ENCODE measurements at regions of chr9 and their contacts with region 1.

Region 1: DNA sequence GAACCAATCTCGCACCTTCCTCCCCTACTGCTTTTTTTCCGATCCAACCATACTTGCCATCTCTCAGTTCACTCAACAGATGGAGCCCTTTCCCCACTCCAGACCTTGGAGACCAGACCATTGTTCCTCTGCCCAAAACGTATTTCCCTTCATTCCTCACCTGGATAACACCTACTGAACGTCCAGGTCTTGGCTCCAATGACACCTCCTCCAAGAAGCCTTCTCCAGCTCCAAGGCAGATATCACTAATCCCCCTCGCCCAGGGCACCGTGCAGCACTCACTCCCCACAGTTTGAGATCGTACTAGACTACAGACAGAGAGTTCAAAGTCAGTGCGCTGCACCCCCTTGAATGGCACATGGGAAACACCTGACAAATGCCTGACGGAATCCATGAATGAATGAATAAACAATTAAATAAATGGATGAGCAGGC is 47.1 kb upstream of the AKNA start:
- DNase-seq: peak; percentile 31 to 60 (median 46)
- ATAC-seq: peak; percentile 86
- H3K4me3 ChIP-seq: no peak overlapping the region
- H3K27ac ChIP-seq: no peak overlapping the region
- H3K4me1 ChIP-seq: peaks cover 0 to 6% of the 10 kb centered on the region in 2 experiments; a peak in 2 of 5 replicates
- H3K27me3 ChIP-seq: no peaks in the 10 kb centered on the region; a peak in 1 of 5 replicates
- CTCF ChIP-seq: peak; percentile 64 to 78 (median 71)
- EP300 ChIP-seq: no peak
- POLR2A ChIP-seq: no peak
- RAD21 ChIP-seq: peak; percentile 71 to 87

Region 2: DNA sequence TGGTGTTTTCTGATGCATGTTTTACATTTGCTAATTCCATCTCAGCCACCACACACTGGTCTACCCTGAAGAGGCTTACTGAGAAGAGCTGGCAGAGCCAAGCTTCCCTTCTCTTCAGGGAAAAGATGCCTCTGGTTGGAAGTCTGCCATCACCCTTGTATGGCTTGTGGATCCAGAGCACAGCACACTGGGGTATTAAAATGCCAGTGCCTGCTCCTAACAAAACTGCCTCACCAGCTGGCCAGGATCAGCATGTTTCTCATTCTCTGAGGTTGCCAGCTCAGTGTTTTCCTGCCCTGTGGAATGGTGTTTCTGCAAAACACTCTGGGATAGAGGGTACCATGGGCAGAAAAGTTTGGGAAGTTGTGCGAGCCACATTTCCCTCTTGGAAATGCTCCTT is 590.4 kb before region 1 on chr9:
- CTCF ChIA-PET with region 1: no interaction called
- POLR2A ChIA-PET with region 1: no interaction called
- in situ Hi-C with region 1: no loop called
- intact Hi-C with region 1: no loop called
- DNase-seq: no peak
- ATAC-seq: no peak
- H3K4me3 ChIP-seq: no peak overlapping the region
- H3K27ac ChIP-seq: no peak overlapping the region
- H3K4me1 ChIP-seq: no peaks in the 10 kb centered on the region
- H3K27me3 ChIP-seq: no peaks in the 10 kb centered on the region
- CTCF ChIP-seq: no peak
- EP300 ChIP-seq: no peak
- POLR2A ChIP-seq: no peak
- RAD21 ChIP-seq: no peak

Region 3: DNA sequence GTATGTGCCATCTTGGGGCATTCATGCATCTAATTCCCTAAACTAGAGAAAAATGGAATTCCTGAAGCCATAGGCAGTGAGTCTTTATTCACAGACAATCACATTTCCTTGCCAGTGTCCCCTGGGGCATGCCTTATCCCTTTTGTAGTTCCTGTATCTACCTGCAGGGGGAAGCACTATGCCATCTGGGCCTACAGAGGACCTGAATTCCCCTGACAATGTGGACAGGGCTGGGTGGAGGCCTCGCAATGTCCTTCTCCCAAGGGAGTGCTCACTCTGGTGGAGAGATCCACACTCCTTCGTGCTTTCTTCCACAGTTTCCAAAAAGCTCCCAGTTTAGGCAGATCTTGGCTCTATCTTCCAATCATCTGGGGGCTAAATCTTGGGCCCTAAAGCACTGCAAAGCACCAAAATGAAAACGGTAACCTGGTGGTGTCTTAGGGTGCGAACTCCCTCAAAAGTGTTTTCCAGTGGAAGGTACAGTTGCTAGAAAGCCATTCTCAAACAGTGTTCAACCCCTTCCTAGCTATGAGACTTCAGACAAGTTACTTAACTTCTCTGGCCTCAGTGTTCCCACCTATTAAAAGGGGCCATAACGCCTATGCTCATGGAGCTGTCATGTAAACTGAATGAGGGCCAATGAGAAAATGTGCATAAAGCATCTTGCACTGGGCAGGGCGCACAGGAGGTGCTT is 52.9 kb after region 1 on chr9:
- CTCF ChIA-PET with region 1: interaction called, 8 read pairs
- POLR2A ChIA-PET with region 1: no interaction called
- in situ Hi-C with region 1: no loop called
- intact Hi-C with region 1: loop called (anchors 5 kb)
- DNase-seq: peak; percentile 78 to 85 (median 78)
- ATAC-seq: peak; percentile 95
- H3K4me3 ChIP-seq: no peak overlapping the region
- H3K27ac ChIP-seq: no peak overlapping the region; the same call in 2 of the 3 replicates
- H3K4me1 ChIP-seq: peaks cover 5 to 21% of the 10 kb centered on the region in 2 experiments; a peak in 3 of 5 replicates
- H3K27me3 ChIP-seq: no peaks in the 10 kb centered on the region
- CTCF ChIP-seq: peak; percentile 80 to 93 (median 82)
- EP300 ChIP-seq: no peak
- POLR2A ChIP-seq: no peak
- RAD21 ChIP-seq: peak; percentile 77 to 87

Region 4: DNA sequence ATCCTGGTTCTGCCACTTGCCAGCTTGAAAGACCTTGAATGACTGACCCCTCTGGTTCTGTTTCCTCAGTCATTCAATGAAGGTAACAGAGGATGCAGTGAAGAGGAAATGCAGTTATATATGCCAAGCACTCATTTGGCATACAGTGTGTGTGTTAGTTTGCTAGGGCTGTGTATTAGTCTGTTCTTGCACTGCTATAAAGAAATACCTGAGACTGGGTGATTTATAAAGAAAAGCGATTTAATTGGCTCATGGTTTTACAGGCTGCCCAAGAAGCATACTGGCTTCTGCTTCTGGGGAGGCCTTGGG is 79.0 kb after region 1 on chr9:
- CTCF ChIA-PET with region 1: no interaction called
- POLR2A ChIA-PET with region 1: no interaction called
- in situ Hi-C with region 1: no loop called
- intact Hi-C with region 1: no loop called
- DNase-seq: no peak
- ATAC-seq: no peak
- H3K4me3 ChIP-seq: no peak overlapping the region
- H3K27ac ChIP-seq: no peak overlapping the region
- H3K4me1 ChIP-seq: no peaks in the 10 kb centered on the region; a peak in 1 of 5 replicates
- H3K27me3 ChIP-seq: peaks cover 24 to 31% of the 10 kb centered on the region in 2 experiments
- CTCF ChIP-seq: no peak
- EP300 ChIP-seq: no peak
- POLR2A ChIP-seq: no peak
- RAD21 ChIP-seq: no peak